Activated CD4-positive, alpha-beta T cell treated with anti-CD3 and anti-CD28 coated beads for 36 hours (primary cell): ENCODE measurements at regions of chr17 and their contacts with region 1.

Region 1: GRCh38 chr17:81484195-81484979 is 28.2 kb downstream of the ACTG1 start:
- DNase-seq: peak; percentile 94
- ATAC-seq: peak; percentile 68
- H3K4me3 Mint-ChIP-seq: peak overlapping the region; percentile 30
- H3K27ac Mint-ChIP-seq: no peak overlapping the region
- H3K4me1 Mint-ChIP-seq: peaks cover 16% of the 10 kb centered on the region
- H3K27me3 Mint-ChIP-seq: peaks cover 26% of the 10 kb centered on the region

Region 2: DNA sequence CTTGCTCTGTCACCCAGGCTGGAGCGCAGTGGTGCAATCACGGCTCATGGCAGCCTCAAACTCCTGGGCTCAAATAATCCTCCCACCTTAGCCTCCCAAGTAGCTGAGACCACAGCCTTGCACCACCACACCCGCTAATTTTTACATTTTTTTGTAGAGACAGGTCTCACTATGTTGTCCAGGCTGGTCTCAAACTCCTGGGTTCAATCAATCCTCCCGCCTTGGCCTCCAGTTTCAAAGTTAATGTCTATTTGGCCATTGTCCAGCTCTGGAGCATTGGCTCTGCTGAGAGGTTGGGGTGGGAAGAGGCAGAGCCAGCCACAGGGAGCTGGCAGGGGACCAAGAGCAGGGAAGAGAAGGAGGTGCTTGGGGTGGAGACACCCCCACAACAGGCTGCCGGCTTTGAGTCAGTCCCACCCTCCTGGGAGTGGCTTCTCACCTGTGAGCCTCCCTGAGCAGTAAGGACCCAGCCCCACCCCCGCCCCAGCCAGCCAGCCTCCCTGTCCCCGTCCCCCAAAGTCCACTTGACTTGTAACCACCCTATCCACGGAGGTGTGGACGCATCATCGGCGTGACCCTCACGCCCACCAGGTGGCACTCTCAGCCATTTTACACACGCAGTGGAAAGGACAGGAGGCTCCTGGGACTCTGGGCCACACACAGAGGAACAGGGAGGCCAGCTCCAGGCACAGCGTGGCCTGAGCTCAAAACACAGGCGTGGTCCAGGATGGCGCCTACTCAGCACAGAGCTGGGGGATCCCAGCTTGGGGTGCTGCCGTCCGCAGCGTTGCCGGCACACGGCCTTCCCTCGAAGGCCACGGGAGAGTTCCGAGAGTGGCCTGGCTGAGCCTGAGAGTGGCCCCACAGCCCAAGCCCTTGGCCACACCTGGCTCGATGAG is 341.8 kb before region 1 on chr17:
- CTCF ChIA-PET with region 1: interaction called, 3 read pairs
- POLR2A ChIA-PET with region 1: no interaction called
- intact Hi-C with region 1: loop called in 1 of 2 experiments (anchors 1 kb)
- DNase-seq: peak; percentile 80
- ATAC-seq: peak; percentile 93
- H3K4me3 Mint-ChIP-seq: no peak overlapping the region
- H3K27ac Mint-ChIP-seq: no peak overlapping the region
- H3K4me1 Mint-ChIP-seq: no peaks in the 10 kb centered on the region
- H3K27me3 Mint-ChIP-seq: no peaks in the 10 kb centered on the region

Region 3: GRCh38 chr17:81285179-81285878 is 199.1 kb before region 1 on chr17:
- CTCF ChIA-PET with region 1: no interaction called
- POLR2A ChIA-PET with region 1: no interaction called
- intact Hi-C with region 1: loop called in 1 of 2 experiments (anchors 2 kb)
- DNase-seq: peak; percentile 78
- ATAC-seq: peak; percentile 91
- H3K4me3 Mint-ChIP-seq: peak overlapping the region; percentile 79
- H3K27ac Mint-ChIP-seq: peak overlapping the region; percentile 95
- H3K4me1 Mint-ChIP-seq: peaks cover 34% of the 10 kb centered on the region
- H3K27me3 Mint-ChIP-seq: no peaks in the 10 kb centered on the region

Region 4: DNA sequence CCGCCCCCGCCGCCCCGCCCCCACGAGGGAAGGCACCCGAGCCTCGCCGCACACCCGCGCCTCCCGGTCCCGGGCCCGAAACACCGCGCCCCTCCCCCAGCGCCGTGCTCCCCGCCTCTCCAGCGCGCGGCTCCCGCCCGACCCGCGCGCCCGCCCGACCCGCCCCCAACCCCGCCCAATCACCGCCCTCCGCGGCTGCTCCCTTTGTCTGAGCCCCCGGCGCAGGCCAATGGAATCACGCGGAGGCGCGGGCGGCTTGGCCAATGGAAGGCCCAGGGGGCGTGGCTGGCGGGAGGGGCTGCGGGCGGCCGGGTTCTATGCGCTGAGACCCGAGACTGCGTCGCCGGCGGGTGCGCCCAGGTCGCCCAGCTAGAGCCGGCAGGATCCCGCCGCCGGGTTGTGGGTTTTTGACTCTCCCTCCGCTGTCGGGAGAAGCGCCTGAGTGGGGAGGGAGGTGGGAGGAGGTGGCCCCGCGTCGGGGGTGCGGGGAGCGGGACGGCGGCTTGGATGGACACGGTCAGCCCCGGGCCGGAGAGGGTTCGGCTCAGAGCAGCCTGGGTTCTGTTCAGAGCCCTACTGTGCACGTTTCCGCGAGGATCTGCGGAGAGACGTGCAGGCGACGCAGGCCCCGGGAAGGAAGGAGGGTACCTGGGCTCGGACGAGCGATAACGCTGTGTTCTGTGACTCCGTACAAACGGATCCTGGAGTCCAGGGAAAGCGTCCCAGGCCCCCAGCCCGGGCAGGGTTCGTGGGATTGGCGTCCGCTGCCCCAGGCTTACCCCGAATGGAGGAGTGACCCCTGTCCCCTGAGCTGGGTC is 138.1 kb before region 1 on chr17:
- CTCF ChIA-PET with region 1: no interaction called
- POLR2A ChIA-PET with region 1: interaction called, 3 read pairs
- intact Hi-C with region 1: loop called in 1 of 2 experiments (anchors 1 kb)
- DNase-seq: peak; percentile 98
- ATAC-seq: peak; percentile 93
- H3K4me3 Mint-ChIP-seq: peak overlapping the region; percentile 26
- H3K27ac Mint-ChIP-seq: no peak overlapping the region
- H3K4me1 Mint-ChIP-seq: peaks cover 19% of the 10 kb centered on the region
- H3K27me3 Mint-ChIP-seq: peaks cover 25% of the 10 kb centered on the region

Region 5: DNA sequence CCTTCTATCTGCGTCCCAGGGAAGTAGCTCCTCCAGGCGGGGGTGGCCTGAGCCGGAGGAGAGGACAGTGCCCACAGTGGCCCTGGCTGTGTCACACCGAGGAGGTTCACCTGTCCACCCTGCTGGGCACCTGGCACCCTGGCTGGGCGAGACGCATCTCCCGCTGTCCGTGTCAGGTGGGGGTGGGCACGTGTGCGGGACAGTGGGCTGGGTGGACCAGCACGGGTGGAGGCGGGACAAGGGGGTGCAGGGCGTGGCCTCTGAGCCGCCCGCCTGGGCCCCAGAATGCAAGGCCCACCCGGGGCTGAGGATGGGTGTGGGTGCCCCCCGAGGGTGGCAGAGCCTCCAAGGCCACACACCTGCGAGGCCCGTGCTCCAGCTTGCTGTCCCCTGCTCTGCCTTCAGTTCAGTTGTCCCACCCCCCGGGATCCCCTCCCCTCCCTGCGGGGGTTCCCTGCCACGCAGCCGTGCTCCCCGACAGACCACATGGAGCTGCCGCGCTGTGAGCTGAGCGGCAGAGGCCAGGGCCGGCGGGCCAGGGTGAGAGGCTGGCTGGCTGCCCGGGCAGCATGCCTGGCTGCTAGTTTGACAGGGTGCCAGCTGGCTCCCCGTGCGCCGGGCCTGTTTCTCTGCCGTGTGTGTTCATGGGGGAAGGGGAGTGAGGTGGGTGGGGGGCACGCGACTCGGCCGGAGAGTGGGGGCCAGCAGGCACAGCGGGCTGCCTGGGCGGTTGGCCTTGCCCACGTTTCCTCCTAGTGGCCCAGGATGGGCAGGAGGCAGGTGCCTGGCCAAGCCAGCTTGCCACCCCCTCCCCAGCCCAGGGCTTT is 55.2 kb before region 1 on chr17:
- CTCF ChIA-PET with region 1: interaction called, 3 read pairs
- POLR2A ChIA-PET with region 1: no interaction called
- intact Hi-C with region 1: loop called in 1 of 2 experiments (anchors 5 kb)
- DNase-seq: no peak
- ATAC-seq: no peak
- H3K4me3 Mint-ChIP-seq: no peak overlapping the region
- H3K27ac Mint-ChIP-seq: no peak overlapping the region
- H3K4me1 Mint-ChIP-seq: peaks cover 6% of the 10 kb centered on the region
- H3K27me3 Mint-ChIP-seq: peaks cover 16% of the 10 kb centered on the region

Region 6: GRCh38 chr17:81636505-81637288 is 152.3 kb after region 1 on chr17 and contains the starts of genes NPLOC4 and TSPAN10:
- CTCF ChIA-PET with region 1: no interaction called
- POLR2A ChIA-PET with region 1: no interaction called
- intact Hi-C with region 1: loop called in 1 of 2 experiments (anchors 1 kb)
- DNase-seq: peak; percentile 91
- ATAC-seq: peak; percentile 89
- H3K4me3 Mint-ChIP-seq: peak within 1 kb of the TSS; percentile 96
- H3K27ac Mint-ChIP-seq: peak within 1 kb of the TSS; percentile 84
- H3K4me1 Mint-ChIP-seq: peaks cover 23% of the 10 kb centered on the region
- H3K27me3 Mint-ChIP-seq: no peaks in the 10 kb centered on the region
- total RNA-seq, gene NPLOC4: 71.8 to 93.1 TPM
- total RNA-seq, gene TSPAN10: 0.34 to 0.35 TPM